ENCODE measurements at regions of chr2 and their contacts with region 1.

Region 1: DNA sequence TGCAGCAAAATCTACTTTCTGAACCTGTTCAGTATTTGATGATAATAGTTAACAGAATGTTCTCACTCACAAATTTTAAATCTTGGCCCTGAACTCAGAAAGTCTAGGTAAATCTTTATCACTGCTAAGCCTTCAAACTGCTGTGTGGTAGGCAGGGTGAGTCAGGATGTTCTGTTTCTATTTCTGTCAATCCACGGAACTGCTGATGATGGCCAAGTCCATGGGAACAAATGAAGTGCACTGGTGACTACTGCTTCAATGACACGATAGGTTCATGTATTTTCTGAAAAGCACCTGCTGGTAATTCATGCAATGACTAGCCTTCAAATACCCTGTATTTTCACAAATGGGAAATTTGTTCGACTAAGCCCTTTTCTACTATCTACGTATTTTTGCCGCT is 14.2 kb downstream of the NIFK start:
- DNase-seq: no peak
- H3K4me3 Mint-ChIP-seq: no peak overlapping the region
- H3K27ac Mint-ChIP-seq: no peak overlapping the region
- H3K4me1 Mint-ChIP-seq: peaks cover 7% of the 10 kb centered on the region
- H3K27me3 Mint-ChIP-seq: no peaks in the 10 kb centered on the region
- CTCF ChIP-seq: no peak

Region 2: GRCh38 chr2:121400201-121400600 is 322.3 kb before region 1 on chr2:
- CTCF ChIA-PET with region 1: no interaction called
- intact Hi-C with region 1: loop called (anchors 5 kb)
- DNase-seq: no peak
- H3K4me3 Mint-ChIP-seq: no peak overlapping the region
- H3K27ac Mint-ChIP-seq: no peak overlapping the region
- H3K4me1 Mint-ChIP-seq: no peaks in the 10 kb centered on the region
- H3K27me3 Mint-ChIP-seq: no peaks in the 10 kb centered on the region
- CTCF ChIP-seq: no peak

Region 3: GRCh38 chr2:121596221-121597080 is 126.0 kb before region 1 on chr2:
- CTCF ChIA-PET with region 1: interaction called, 4 read pairs
- intact Hi-C with region 1: loop called (anchors 1 kb)
- DNase-seq: peak; percentile 40
- H3K4me3 Mint-ChIP-seq: peak overlapping the region; percentile 63
- H3K27ac Mint-ChIP-seq: peak overlapping the region; percentile 60
- H3K4me1 Mint-ChIP-seq: peaks cover 40% of the 10 kb centered on the region
- H3K27me3 Mint-ChIP-seq: no peaks in the 10 kb centered on the region
- CTCF ChIP-seq: peak; percentile 65

Region 4: DNA sequence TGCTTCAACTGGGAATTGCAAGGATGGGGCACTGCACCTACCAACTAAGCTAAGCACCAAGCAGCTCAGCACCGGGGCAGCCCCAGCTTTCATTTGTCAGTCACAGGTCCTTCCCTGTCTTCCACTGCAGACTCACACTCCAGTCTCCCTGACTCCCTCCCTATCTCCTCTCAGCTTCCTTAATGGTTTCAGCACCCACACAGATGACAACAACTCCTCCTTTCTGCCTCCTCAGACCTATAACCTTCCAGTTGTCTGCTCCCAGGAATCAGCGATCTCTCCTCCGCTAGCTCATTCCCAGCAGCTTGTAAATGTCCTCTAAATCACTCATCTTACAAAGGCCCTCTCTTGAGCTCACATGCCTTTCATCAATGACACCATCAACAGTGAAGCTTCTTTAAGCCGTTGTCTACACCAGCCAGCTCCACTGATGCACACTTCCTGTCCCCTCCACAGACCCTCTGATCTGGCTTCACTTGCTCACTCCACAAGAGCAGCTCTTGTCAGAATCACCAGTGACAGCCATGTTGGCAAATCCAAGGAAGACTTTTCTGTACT is 105.4 kb before region 1 on chr2:
- CTCF ChIA-PET with region 1: no interaction called
- intact Hi-C with region 1: no loop called
- DNase-seq: no peak
- H3K4me3 Mint-ChIP-seq: no peak overlapping the region
- H3K27ac Mint-ChIP-seq: no peak overlapping the region
- H3K4me1 Mint-ChIP-seq: no peaks in the 10 kb centered on the region
- H3K27me3 Mint-ChIP-seq: no peaks in the 10 kb centered on the region
- CTCF ChIP-seq: no peak